ENCODE measurements at regions of chr10 and their contacts with region 1.

Region 1: GRCh38 chr10:77710759-77711682 is 73.4 kb upstream of the KCNMA1 start:
- DNase-seq: peak; percentile 76
- ATAC-seq: peak; percentile 99
- H3K4me3 Mint-ChIP-seq: no peak overlapping the region
- H3K27ac Mint-ChIP-seq: no peak overlapping the region
- H3K4me1 Mint-ChIP-seq: peaks cover 4% of the 10 kb centered on the region
- H3K27me3 Mint-ChIP-seq: peaks cover 41% of the 10 kb centered on the region

Region 2: GRCh38 chr10:77165445-77166208 is 545.4 kb before region 1 on chr10:
- CTCF ChIA-PET with region 1: interaction called, 25 read pairs
- POLR2A ChIA-PET with region 1: no interaction called
- DNase-seq: peak; percentile 56
- ATAC-seq: peak; percentile 70
- H3K4me3 Mint-ChIP-seq: no peak overlapping the region
- H3K27ac Mint-ChIP-seq: no peak overlapping the region
- H3K4me1 Mint-ChIP-seq: no peaks in the 10 kb centered on the region
- H3K27me3 Mint-ChIP-seq: peaks cover 27% of the 10 kb centered on the region

Region 3: GRCh38 chr10:77173615-77174461 is 537.2 kb before region 1 on chr10:
- CTCF ChIA-PET with region 1: interaction called, 41 read pairs
- POLR2A ChIA-PET with region 1: no interaction called
- DNase-seq: peak; percentile 80
- ATAC-seq: peak; percentile 57
- H3K4me3 Mint-ChIP-seq: no peak overlapping the region
- H3K27ac Mint-ChIP-seq: no peak overlapping the region
- H3K4me1 Mint-ChIP-seq: no peaks in the 10 kb centered on the region
- H3K27me3 Mint-ChIP-seq: peaks cover 2% of the 10 kb centered on the region